Activated T-helper 1 cell treated with anti-CD3 and anti-CD28 coated beads, Interleukin-12 subunit alpha, Interleukin-12 subunit beta, Interleukin-2, Interleukin-4 antibody, amounts not matched to agents 30 ng/mL and 10 ng/mL and 1 ng/mL, durations not matched to agents 14 hours and 24 hours and 36 hours (primary cell): ENCODE measurements at regions of chr2 and their contacts with region 1.

Region 1: GRCh38 chr2:74147727-74148456 is at the start of gene BOLA3:
- DNase-seq: peak; percentile 82
- H3K4me3 Mint-ChIP-seq: no peak within 1 kb of the TSS
- H3K27ac Mint-ChIP-seq: no peak within 1 kb of the TSS
- H3K4me1 Mint-ChIP-seq: peaks cover under 1% of the 10 kb centered on the region
- H3K27me3 Mint-ChIP-seq: no peaks in the 10 kb centered on the region
- total RNA-seq, gene BOLA3: 94.2 and 98.2 TPM in 2 replicates

Region 2: DNA sequence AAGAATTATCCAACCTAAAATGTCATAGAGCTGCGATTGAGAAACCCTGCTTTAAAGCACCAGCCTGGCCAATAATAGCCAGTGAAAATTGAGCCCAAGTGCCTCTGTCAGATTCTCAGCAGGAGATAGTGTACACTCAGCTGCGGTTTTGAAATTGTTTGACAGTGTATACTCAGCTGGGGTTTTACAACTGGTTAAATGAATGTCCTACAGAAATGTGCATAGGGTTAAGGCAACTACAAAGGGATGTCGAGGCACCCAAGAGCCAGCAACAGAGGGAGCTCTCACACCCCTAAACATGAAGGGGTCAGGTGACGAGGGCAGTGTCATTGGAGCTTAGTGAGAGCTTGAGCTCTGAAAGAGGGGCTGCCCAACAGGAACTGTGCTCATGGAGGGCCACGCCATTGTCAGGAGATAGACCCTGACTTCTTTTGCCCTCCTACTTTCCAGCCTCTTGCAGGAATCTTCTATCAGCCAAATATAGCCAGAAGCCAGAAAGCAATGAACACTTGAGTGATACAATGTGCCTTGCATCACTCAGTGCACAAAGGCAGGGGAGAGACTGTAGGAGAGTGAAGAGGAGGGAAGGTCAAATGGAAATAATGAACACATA is 239.9 kb before region 1 on chr2:
- intact Hi-C with region 1: loop called (anchors 2 kb)
- DNase-seq: no peak
- H3K4me3 Mint-ChIP-seq: no peak overlapping the region
- H3K27ac Mint-ChIP-seq: no peak overlapping the region
- H3K4me1 Mint-ChIP-seq: peaks cover 9% of the 10 kb centered on the region
- H3K27me3 Mint-ChIP-seq: no peaks in the 10 kb centered on the region

Region 3: DNA sequence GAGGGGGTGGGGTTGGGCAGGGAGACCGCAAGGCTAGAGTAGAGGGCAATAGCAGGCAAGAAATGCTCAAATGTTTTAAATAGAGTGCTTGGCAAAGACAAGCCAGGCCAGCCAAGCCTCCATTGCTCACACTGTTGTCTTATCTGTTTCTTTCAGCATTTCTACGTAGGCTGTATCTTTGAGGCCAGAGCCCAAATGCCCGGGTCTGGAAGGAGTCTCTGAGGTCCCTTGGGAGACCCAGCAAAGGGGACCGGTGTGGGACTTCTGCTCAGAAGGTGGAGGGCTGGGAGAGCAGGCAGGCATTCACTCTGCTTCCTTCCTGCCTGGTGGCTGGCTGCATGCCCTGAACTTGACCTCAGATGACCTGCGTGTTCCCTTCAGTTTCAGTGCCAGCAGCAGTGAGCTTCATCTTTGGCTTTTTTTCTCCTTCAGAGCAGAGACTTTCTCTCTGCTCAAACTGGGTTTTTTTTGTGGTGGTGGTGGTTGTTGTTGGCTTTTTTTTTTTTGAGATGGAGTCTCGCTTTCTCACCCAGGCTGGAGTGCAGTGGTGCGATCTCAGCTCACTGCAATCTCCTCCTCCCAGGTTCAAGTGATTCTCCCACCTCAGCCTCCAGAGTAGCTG is 176.9 kb before region 1 on chr2:
- intact Hi-C with region 1: loop called (anchors 2 kb)
- DNase-seq: peak; percentile 32
- H3K4me3 Mint-ChIP-seq: peak overlapping the region; percentile 69
- H3K27ac Mint-ChIP-seq: peak overlapping the region; percentile 79
- H3K4me1 Mint-ChIP-seq: peaks cover 38% of the 10 kb centered on the region
- H3K27me3 Mint-ChIP-seq: no peaks in the 10 kb centered on the region

Region 4: GRCh38 chr2:74002487-74003391 is 145.2 kb before region 1 on chr2:
- intact Hi-C with region 1: loop called (anchors 2 kb)
- DNase-seq: peak; percentile 81
- H3K4me3 Mint-ChIP-seq: peak overlapping the region; percentile 89
- H3K27ac Mint-ChIP-seq: peak overlapping the region; percentile 66
- H3K4me1 Mint-ChIP-seq: peaks cover 69% of the 10 kb centered on the region
- H3K27me3 Mint-ChIP-seq: peaks cover 2% of the 10 kb centered on the region

Region 5: GRCh38 chr2:74080346-74080745 is 67.5 kb before region 1 on chr2:
- intact Hi-C with region 1: no loop called
- DNase-seq: no peak
- H3K4me3 Mint-ChIP-seq: no peak overlapping the region
- H3K27ac Mint-ChIP-seq: no peak overlapping the region
- H3K4me1 Mint-ChIP-seq: peaks cover 5% of the 10 kb centered on the region
- H3K27me3 Mint-ChIP-seq: no peaks in the 10 kb centered on the region

Region 6: DNA sequence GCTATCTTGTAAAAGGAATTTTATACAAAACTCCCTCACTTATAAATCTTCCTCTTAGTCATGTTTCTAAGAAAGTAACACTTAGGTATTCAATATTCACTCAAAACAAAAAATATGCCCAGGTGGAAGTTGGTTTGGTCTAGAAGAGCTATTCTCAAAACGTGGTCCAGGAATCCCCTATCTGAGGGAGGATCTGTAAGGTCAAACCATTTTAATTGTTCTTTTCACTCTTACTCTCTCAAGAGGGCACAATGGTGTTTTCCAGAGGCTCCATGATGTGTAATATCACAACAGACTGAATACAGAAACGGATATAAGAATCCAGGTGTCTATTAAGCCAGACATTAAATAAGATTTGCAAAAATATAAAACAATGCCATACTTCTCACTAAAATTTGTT is 20.8 kb after region 1 on chr2:
- intact Hi-C with region 1: loop called (anchors 2 kb)
- DNase-seq: no peak
- H3K4me3 Mint-ChIP-seq: peak overlapping the region; percentile 6
- H3K27ac Mint-ChIP-seq: peak overlapping the region; percentile 67
- H3K4me1 Mint-ChIP-seq: peaks cover 20% of the 10 kb centered on the region
- H3K27me3 Mint-ChIP-seq: no peaks in the 10 kb centered on the region

Region 7: DNA sequence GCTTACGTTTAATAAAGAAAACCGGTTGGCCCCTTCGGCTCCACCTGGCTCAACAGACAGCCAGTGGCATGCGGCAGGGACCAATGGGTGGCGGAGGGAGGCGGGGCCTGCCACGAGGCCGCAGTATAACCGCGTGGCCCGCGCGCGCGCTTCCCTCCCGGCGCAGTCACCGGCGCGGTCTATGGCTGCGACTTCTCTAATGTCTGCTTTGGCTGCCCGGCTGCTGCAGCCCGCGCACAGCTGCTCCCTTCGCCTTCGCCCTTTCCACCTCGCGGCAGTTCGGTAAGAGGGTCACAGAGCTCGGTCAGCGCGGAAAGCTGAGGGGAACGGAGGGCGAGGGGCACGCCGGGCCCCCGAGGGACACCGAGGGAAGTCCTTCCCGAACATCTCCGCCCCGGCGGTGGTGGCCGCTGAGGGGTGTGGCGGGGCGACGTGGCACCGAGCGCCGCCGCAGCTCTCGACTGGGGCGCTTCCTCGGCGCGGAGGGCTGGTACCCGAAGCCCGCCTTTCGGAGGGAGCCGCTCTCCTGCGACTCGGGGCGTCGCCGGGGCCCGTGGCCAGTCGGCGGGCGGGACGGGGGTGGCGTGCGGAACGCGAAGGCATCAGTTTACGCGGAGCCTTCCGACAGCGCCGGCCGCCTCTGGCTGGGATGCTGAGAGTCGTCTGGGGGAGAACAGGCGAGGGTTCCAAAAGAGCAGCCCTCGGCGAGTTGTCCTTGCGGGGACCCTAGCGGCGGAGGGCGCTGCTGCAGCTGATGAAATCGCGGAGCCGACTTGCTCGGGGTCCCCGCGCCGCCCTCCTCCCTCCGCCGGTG is 50.8 kb after region 1 on chr2 and contains the start of gene MTHFD2:
- intact Hi-C with region 1: loop called (anchors 1 kb)
- DNase-seq: peak; percentile 91
- H3K4me3 Mint-ChIP-seq: peak within 1 kb of the TSS; percentile 98
- H3K27ac Mint-ChIP-seq: peak within 1 kb of the TSS; percentile 100
- H3K4me1 Mint-ChIP-seq: peaks cover 59% of the 10 kb centered on the region
- H3K27me3 Mint-ChIP-seq: no peaks in the 10 kb centered on the region
- total RNA-seq, gene MTHFD2: 437 and 457 TPM in 2 replicates

Region 8: DNA sequence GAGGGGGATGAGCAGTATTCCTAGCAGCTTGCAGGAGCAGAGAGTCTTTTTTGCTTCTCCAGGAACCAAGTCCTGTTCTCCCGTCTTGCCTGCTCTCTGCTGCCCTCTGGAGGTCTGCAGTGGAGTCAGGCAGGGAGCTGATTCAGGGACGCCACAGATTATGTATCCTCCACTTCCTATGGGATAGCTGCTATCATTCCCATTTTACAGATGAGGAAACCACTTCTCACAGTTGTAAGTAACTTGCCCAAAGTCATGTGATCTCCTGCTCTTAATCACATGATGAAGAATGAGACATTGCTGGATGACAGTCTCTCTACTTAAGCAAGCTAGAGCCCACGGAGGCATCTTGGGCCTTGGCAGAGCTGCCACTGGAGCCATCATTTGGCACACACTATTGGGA is 187.0 kb after region 1 on chr2:
- intact Hi-C with region 1: loop called (anchors 10 kb)
- DNase-seq: peak; percentile 57
- H3K4me3 Mint-ChIP-seq: no peak overlapping the region
- H3K27ac Mint-ChIP-seq: no peak overlapping the region
- H3K4me1 Mint-ChIP-seq: no peaks in the 10 kb centered on the region
- H3K27me3 Mint-ChIP-seq: peaks cover 2% of the 10 kb centered on the region